GM12878 (cell line): ENCODE measurements at regions of chr7 and their contacts with region 1.

Region 1: GRCh38 chr7:7968543-7969305 is at the start of gene GLCCI1:
- DNase-seq: peak; percentile 98
- ATAC-seq: peak; percentile 88
- H3K4me3 ChIP-seq: peak within 1 kb of the TSS; percentile 82
- H3K27ac ChIP-seq: peak within 1 kb of the TSS; percentile 95
- H3K4me1 ChIP-seq: peaks cover 31% of the 10 kb centered on the region
- H3K27me3 ChIP-seq: no peaks in the 10 kb centered on the region
- CTCF ChIP-seq: no peak
- EP300 ChIP-seq: peak; percentile 21 to 61; a peak in 1 of 4 replicates
- POLR2A ChIP-seq: peak; percentile 74
- RAD21 ChIP-seq: no peak
- polyA plus RNA-seq, gene GLCCI1: 16.2 to 17.9 TPM

Region 2: GRCh38 chr7:7352845-7353244 is 615.9 kb before region 1 on chr7:
- CTCF ChIA-PET with region 1: no interaction called
- POLR2A ChIA-PET with region 1: no interaction called
- RAD21 ChIA-PET with region 1: no interaction called
- SMC1A ChIA-PET with region 1: no interaction called
- in situ Hi-C with region 1: no loop called
- intact Hi-C with region 1: no loop called
- DNase-seq: no peak
- ATAC-seq: no peak
- H3K4me3 ChIP-seq: no peak overlapping the region
- H3K27ac ChIP-seq: no peak overlapping the region
- H3K4me1 ChIP-seq: no peaks in the 10 kb centered on the region
- H3K27me3 ChIP-seq: no peaks in the 10 kb centered on the region
- CTCF ChIP-seq: peak in 1 of 3 experiments; percentile 16; a peak in 2 of 6 replicates
- EP300 ChIP-seq: no peak
- POLR2A ChIP-seq: no peak
- RAD21 ChIP-seq: peak; percentile 37

Region 3: GRCh38 chr7:7640221-7641128 is 328.2 kb before region 1 on chr7 and contains the start of gene UMAD1:
- CTCF ChIA-PET with region 1: no interaction called
- POLR2A ChIA-PET with region 1: interaction called, 5 read pairs
- RAD21 ChIA-PET with region 1: interaction called, 8 read pairs
- SMC1A ChIA-PET with region 1: interaction called, 4 read pairs
- in situ Hi-C with region 1: no loop called
- intact Hi-C with region 1: loop called (anchors 2 kb)
- DNase-seq: peak; percentile 99
- ATAC-seq: peak; percentile 95
- H3K4me3 ChIP-seq: peak within 1 kb of the TSS; percentile 93
- H3K27ac ChIP-seq: peak within 1 kb of the TSS; percentile 79
- H3K4me1 ChIP-seq: no peaks in the 10 kb centered on the region
- H3K27me3 ChIP-seq: no peaks in the 10 kb centered on the region
- CTCF ChIP-seq: no peak
- EP300 ChIP-seq: 0 out of 4 replicates have a peak, but pooled peaks of 1 of the 2 experiments have one; percentile 15
- POLR2A ChIP-seq: peak; percentile 95
- RAD21 ChIP-seq: no peak
- polyA plus RNA-seq, gene UMAD1: 8.7 to 8.8 TPM

Region 4: DNA sequence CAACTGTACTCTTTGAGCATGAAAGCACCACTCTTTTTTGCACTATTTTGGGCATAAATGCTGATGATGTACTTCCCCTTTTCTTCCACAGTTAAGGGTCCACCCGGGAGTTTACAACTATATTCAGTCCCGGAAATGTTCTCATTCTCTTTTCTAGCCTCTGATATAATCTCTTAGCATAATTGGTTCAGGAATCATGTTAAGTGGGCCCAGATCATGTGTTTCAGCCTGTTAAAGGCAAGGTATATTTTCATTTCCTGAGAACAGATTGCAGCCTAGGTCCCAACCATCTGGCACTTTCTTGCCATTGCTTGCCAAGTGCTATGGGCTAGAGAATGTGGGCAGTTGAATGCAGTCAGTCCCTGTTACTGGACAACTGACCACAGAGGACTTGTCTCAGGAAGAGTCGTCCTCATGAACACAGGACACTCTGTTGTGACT is 111.6 kb before region 1 on chr7:
- CTCF ChIA-PET with region 1: interaction called, 3 read pairs
- POLR2A ChIA-PET with region 1: interaction called, 3 read pairs
- RAD21 ChIA-PET with region 1: interaction called, 10 read pairs
- SMC1A ChIA-PET with region 1: interaction called, 7 read pairs
- in situ Hi-C with region 1: no loop called
- intact Hi-C with region 1: no loop called
- DNase-seq: no peak
- ATAC-seq: peak; percentile 84
- H3K4me3 ChIP-seq: no peak overlapping the region
- H3K27ac ChIP-seq: peak overlapping the region; percentile 29; the same call in 1 of the 2 replicates
- H3K4me1 ChIP-seq: peaks cover 4% of the 10 kb centered on the region
- H3K27me3 ChIP-seq: no peaks in the 10 kb centered on the region
- CTCF ChIP-seq: no peak
- EP300 ChIP-seq: no peak
- POLR2A ChIP-seq: no peak
- RAD21 ChIP-seq: no peak

Region 5: GRCh38 chr7:7884855-7885254 is 83.9 kb before region 1 on chr7:
- CTCF ChIA-PET with region 1: no interaction called
- POLR2A ChIA-PET with region 1: no interaction called
- RAD21 ChIA-PET with region 1: no interaction called
- SMC1A ChIA-PET with region 1: no interaction called
- in situ Hi-C with region 1: no loop called
- intact Hi-C with region 1: no loop called
- DNase-seq: no peak
- ATAC-seq: no peak
- H3K4me3 ChIP-seq: no peak overlapping the region
- H3K27ac ChIP-seq: no peak overlapping the region
- H3K4me1 ChIP-seq: no peaks in the 10 kb centered on the region
- H3K27me3 ChIP-seq: no peaks in the 10 kb centered on the region
- CTCF ChIP-seq: no peak
- EP300 ChIP-seq: no peak
- POLR2A ChIP-seq: no peak
- RAD21 ChIP-seq: no peak

Region 6: DNA sequence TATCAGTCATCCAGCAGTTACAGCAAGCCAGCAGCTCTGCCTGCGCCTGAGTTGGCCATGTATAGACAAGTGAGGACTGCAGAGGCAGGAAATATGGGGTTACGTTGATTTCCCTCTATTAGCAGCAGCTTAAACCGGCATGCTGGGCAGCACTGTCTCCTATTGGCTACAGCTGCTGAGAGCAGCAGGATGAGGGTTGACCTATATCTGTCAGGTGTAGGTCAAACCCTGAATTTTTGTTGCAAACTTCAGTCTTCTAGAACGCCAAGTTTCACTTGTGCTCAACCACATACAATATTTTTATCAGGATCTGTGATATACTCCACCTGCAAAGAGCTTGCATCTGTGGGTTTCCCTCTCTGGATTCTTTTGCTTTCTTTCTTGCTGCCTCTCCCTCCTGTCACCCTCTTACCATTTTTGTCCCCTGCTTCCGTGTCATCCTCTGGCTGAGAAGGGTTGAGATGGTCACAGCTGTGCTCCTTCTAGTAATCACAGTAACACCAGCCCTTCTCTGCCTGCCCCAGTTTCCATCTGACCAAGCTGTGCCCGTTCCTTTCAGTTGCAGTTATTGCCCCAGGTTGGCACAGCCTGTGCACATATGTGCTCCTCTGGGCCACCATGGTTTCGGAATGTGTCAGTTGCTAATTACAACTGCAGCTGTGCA is 24.0 kb before region 1 on chr7:
- CTCF ChIA-PET with region 1: interaction called, 14 read pairs
- POLR2A ChIA-PET with region 1: interaction called, 19 read pairs
- RAD21 ChIA-PET with region 1: interaction called, 80 read pairs
- SMC1A ChIA-PET with region 1: interaction called, 132 read pairs
- in situ Hi-C with region 1: no loop called
- intact Hi-C with region 1: loop called (anchors 2 kb)
- DNase-seq: peak; percentile 99
- ATAC-seq: peak; percentile 95
- H3K4me3 ChIP-seq: peak overlapping the region; percentile 52
- H3K27ac ChIP-seq: peak overlapping the region; percentile 78
- H3K4me1 ChIP-seq: peaks cover 15% of the 10 kb centered on the region
- H3K27me3 ChIP-seq: no peaks in the 10 kb centered on the region
- CTCF ChIP-seq: 0 out of 6 replicates have a peak, but pooled peaks of 1 of the 3 experiments have one; percentile 7
- EP300 ChIP-seq: peak; percentile 78 to 85
- POLR2A ChIP-seq: peak; percentile 54
- RAD21 ChIP-seq: peak; percentile 46

Region 7: GRCh38 chr7:8035647-8036518 is 67.2 kb after region 1 on chr7:
- CTCF ChIA-PET with region 1: no interaction called
- POLR2A ChIA-PET with region 1: no interaction called
- RAD21 ChIA-PET with region 1: interaction called, 4 read pairs
- SMC1A ChIA-PET with region 1: interaction called, 4 read pairs
- in situ Hi-C with region 1: no loop called
- intact Hi-C with region 1: loop called (anchors 5 kb)
- DNase-seq: peak; percentile 23
- ATAC-seq: peak; percentile 88
- H3K4me3 ChIP-seq: no peak overlapping the region
- H3K27ac ChIP-seq: no peak overlapping the region
- H3K4me1 ChIP-seq: no peaks in the 10 kb centered on the region
- H3K27me3 ChIP-seq: no peaks in the 10 kb centered on the region
- CTCF ChIP-seq: peak in 2 of 3 experiments; percentile 50 to 57; a peak in 4 of 6 replicates
- EP300 ChIP-seq: no peak
- POLR2A ChIP-seq: no peak
- RAD21 ChIP-seq: peak; percentile 38

Region 8: GRCh38 chr7:8056431-8056830 is 87.7 kb after region 1 on chr7:
- CTCF ChIA-PET with region 1: no interaction called
- POLR2A ChIA-PET with region 1: no interaction called
- RAD21 ChIA-PET with region 1: no interaction called
- SMC1A ChIA-PET with region 1: no interaction called
- in situ Hi-C with region 1: no loop called
- intact Hi-C with region 1: no loop called
- DNase-seq: no peak
- ATAC-seq: no peak
- H3K4me3 ChIP-seq: no peak overlapping the region
- H3K27ac ChIP-seq: no peak overlapping the region
- H3K4me1 ChIP-seq: no peaks in the 10 kb centered on the region
- H3K27me3 ChIP-seq: no peaks in the 10 kb centered on the region
- CTCF ChIP-seq: no peak
- EP300 ChIP-seq: no peak
- POLR2A ChIP-seq: no peak
- RAD21 ChIP-seq: no peak

Region 9: GRCh38 chr7:8134089-8134733 is 165.5 kb after region 1 on chr7:
- CTCF ChIA-PET with region 1: no interaction called
- POLR2A ChIA-PET with region 1: interaction called, 23 read pairs
- RAD21 ChIA-PET with region 1: interaction called, 56 read pairs
- SMC1A ChIA-PET with region 1: interaction called, 29 read pairs
- in situ Hi-C with region 1: no loop called
- intact Hi-C with region 1: loop called (anchors 2 kb)
- DNase-seq: peak; percentile 99
- ATAC-seq: peak; percentile 73
- H3K4me3 ChIP-seq: no peak overlapping the region
- H3K27ac ChIP-seq: peak overlapping the region; percentile 94
- H3K4me1 ChIP-seq: peaks cover 54% of the 10 kb centered on the region
- H3K27me3 ChIP-seq: no peaks in the 10 kb centered on the region
- CTCF ChIP-seq: no peak
- EP300 ChIP-seq: peak; percentile 81 to 92
- POLR2A ChIP-seq: no peak
- RAD21 ChIP-seq: peak; percentile 39; the same call in 1 of the 2 replicates